Vagina (tissue), 2 donors: ENCODE measurements at regions of chrX and their contacts with region 1.

Region 1: GRCh38 chrX:6449946-6450345 is 85.0 kb downstream of the VCX3A start:
- DNase-seq: no peak
- H3K4me3 ChIP-seq: no peak overlapping the region
- H3K27ac ChIP-seq: no peak overlapping the region
- H3K4me1 ChIP-seq: no peaks in the 10 kb centered on the region
- H3K27me3 ChIP-seq: no peaks in the 10 kb centered on the region
- CTCF ChIP-seq: no peak
- POLR2A ChIP-seq: no peak

Region 2: DNA sequence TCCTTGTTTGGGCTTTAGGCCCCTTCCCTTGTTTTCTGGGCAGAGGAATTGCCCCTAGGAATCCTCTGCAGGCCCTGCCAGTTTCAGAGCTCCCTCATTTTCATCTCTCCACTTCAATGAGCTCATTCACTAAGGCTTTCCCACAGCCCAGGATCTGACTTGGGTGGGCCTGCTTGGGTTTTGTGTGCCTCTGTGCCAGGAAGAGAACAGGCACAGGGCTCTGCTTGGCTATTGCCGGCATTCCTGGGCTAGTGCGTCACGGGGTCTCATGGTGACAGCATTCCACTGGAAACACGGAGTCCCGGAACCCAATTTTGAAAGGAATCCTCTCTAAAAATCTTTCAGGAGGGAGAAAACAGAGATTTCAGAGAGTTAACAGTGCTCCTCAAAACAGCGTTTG is 65.6 kb before region 1 on chrX:
- intact Hi-C with region 1: no loop called
- DNase-seq: no peak
- H3K4me3 ChIP-seq: no peak overlapping the region
- H3K27ac ChIP-seq: no peak overlapping the region
- H3K4me1 ChIP-seq: no peaks in the 10 kb centered on the region
- H3K27me3 ChIP-seq: no peaks in the 10 kb centered on the region
- CTCF ChIP-seq: no peak
- POLR2A ChIP-seq: no peak

Region 3: GRCh38 chrX:7462110-7462509 is 1012.2 kb after region 1 on chrX:
- intact Hi-C with region 1: loop called (anchors 5 kb)
- DNase-seq: no peak
- H3K4me3 ChIP-seq: no peak overlapping the region
- H3K27ac ChIP-seq: no peak overlapping the region
- H3K4me1 ChIP-seq: no peaks in the 10 kb centered on the region
- H3K27me3 ChIP-seq: no peaks in the 10 kb centered on the region
- CTCF ChIP-seq: no peak
- POLR2A ChIP-seq: no peak

Region 4: DNA sequence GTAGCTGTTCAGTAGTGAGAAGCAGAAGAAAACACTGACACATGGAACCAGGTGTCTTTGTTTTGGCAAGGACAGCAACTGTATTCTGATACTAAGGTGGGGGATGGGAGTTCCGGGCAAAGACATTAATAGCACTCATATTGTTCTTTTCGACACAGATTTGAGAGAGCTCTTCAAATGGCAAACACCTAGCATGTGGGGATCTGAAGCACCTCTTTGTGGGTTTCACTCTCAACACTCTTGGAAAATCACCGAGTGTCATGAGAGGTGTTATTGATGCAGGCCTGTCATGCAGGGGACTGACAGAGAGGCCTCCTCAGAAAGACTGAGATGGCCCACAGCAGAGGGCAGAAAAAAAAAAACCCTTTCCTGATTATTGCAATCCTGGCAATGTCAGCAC is 1164.7 kb after region 1 on chrX:
- intact Hi-C with region 1: no loop called
- DNase-seq: no peak
- H3K4me3 ChIP-seq: no peak overlapping the region
- H3K27ac ChIP-seq: no peak overlapping the region
- H3K4me1 ChIP-seq: no peaks in the 10 kb centered on the region
- H3K27me3 ChIP-seq: no peaks in the 10 kb centered on the region
- CTCF ChIP-seq: no peak
- POLR2A ChIP-seq: no peak